Endothelial cell of umbilical vein (primary cell): ENCODE measurements at regions of chr2 and their contacts with region 1.

Region 1: GRCh38 chr2:159118115-159118858 is 149.8 kb downstream of the TANC1 start:
- DNase-seq: peak; percentile 88
- H3K4me3 ChIP-seq: no peak overlapping the region
- H3K27ac ChIP-seq: peak overlapping the region; percentile 21
- H3K4me1 ChIP-seq: peaks cover 18% of the 10 kb centered on the region
- H3K27me3 ChIP-seq: no peaks in the 10 kb centered on the region
- CTCF ChIP-seq: peak; percentile 84 to 85
- POLR2A ChIP-seq: no peak

Region 2: DNA sequence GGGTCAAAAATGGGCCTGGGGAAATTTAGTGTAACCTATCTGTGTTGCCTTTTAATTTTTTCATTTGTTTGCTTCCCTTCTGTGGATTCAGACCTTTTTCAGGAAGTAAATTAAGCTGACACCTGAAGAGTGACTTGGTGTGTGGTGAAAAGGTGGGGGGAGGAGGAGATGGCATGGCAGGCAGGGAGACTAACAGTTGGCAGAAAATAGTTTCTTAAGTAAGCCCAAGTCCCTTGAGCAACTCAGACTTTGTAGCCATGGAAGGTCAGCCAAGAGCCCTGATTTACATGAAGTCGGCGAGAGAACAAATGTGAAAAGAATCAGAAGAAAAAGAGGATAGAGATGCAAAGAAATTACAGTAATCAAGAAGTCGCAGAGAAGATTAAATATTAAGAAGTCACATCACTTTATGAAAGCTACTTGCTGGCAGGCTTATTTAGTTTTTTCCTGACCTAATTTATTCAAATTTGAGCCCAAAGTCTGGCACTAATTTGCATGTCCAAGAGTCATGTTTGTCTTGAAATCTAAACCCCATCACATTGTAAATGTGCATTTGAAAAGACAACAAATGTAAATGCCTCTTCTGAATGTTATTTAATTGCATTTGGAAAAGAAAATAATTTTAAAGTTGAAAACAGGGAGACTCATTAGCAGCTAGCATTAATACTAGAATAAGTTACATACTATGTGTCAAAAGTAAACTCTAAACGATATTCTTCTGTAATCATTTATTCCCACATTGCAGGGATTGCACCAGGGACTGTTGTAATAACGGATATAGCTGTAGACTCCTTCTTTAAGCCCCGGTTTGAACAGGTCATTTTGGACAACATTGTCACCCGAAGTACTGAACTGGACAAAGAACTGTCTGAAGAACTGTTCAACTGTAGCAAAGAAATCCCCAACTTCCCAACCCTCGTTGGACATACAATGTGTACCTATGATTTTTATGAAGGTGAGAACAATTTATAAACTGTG is 997.3 kb before region 1 on chr2:
- CTCF ChIA-PET with region 1: no interaction called
- POLR2A ChIA-PET with region 1: no interaction called
- dilution Hi-C with region 1: no loop called
- intact Hi-C with region 1: no loop called
- DNase-seq: no peak
- H3K4me3 ChIP-seq: no peak overlapping the region
- H3K27ac ChIP-seq: no peak overlapping the region
- H3K4me1 ChIP-seq: no peaks in the 10 kb centered on the region
- H3K27me3 ChIP-seq: peaks cover 0 to under 1% of the 10 kb centered on the region in 2 experiments
- CTCF ChIP-seq: no peak
- POLR2A ChIP-seq: no peak

Region 3: GRCh38 chr2:158953926-158954763 is 164.1 kb before region 1 on chr2:
- CTCF ChIA-PET with region 1: interaction called, 14 read pairs
- POLR2A ChIA-PET with region 1: no interaction called
- dilution Hi-C with region 1: no loop called
- intact Hi-C with region 1: no loop called
- DNase-seq: peak; percentile 91
- H3K4me3 ChIP-seq: no peak overlapping the region
- H3K27ac ChIP-seq: peak overlapping the region; percentile 60
- H3K4me1 ChIP-seq: peaks cover 14% of the 10 kb centered on the region
- H3K27me3 ChIP-seq: no peaks in the 10 kb centered on the region
- CTCF ChIP-seq: no peak
- POLR2A ChIP-seq: no peak

Region 4: GRCh38 chr2:159030674-159031380 is 87.5 kb before region 1 on chr2:
- CTCF ChIA-PET with region 1: interaction called, 34 read pairs
- POLR2A ChIA-PET with region 1: interaction called, 3 read pairs
- dilution Hi-C with region 1: no loop called
- intact Hi-C with region 1: loop called (anchors 1 kb)
- DNase-seq: peak; percentile 94
- H3K4me3 ChIP-seq: peak overlapping the region in 1 of 3 experiments; percentile 12
- H3K27ac ChIP-seq: peak overlapping the region; percentile 82
- H3K4me1 ChIP-seq: peaks cover 50% of the 10 kb centered on the region
- H3K27me3 ChIP-seq: no peaks in the 10 kb centered on the region
- CTCF ChIP-seq: no peak
- POLR2A ChIP-seq: no peak

Region 5: GRCh38 chr2:159076241-159076640 is 42.0 kb before region 1 on chr2:
- CTCF ChIA-PET with region 1: interaction called, 12 read pairs
- POLR2A ChIA-PET with region 1: no interaction called
- dilution Hi-C with region 1: no loop called
- intact Hi-C with region 1: no loop called
- DNase-seq: peak; percentile 87
- H3K4me3 ChIP-seq: no peak overlapping the region
- H3K27ac ChIP-seq: peak overlapping the region; percentile 46
- H3K4me1 ChIP-seq: peaks cover 66% of the 10 kb centered on the region
- H3K27me3 ChIP-seq: no peaks in the 10 kb centered on the region
- CTCF ChIP-seq: no peak
- POLR2A ChIP-seq: no peak

Region 6: DNA sequence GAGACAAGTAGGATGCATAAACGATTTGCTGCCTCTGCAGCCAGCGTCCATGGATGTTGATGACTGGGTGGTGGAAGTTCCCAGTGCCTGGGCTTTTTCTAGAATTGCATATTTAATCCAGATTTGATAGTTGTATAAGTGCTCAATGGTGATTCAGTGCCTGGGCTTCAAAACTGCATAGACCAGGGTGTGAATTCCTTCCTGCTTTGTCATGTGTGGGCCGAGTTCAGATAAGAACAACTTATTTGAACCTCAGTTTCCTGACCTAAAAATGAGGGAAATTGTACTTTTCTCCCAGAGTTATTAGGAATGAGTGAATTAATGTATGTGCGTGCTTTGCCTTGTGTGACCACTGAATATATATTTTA is 13.6 kb after region 1 on chr2:
- CTCF ChIA-PET with region 1: interaction called, 19 read pairs
- POLR2A ChIA-PET with region 1: no interaction called
- dilution Hi-C with region 1: no loop called
- intact Hi-C with region 1: no loop called
- DNase-seq: peak; percentile 91
- H3K4me3 ChIP-seq: no peak overlapping the region
- H3K27ac ChIP-seq: peak overlapping the region; percentile 80
- H3K4me1 ChIP-seq: peaks cover 69% of the 10 kb centered on the region
- H3K27me3 ChIP-seq: no peaks in the 10 kb centered on the region
- CTCF ChIP-seq: no peak
- POLR2A ChIP-seq: peak; percentile 51